Transverse colon (tissue), 4 donors: ENCODE measurements at regions of chr3 and their contacts with region 1.

Region 1: GRCh38 chr3:47009225-47010110 is 30.0 kb downstream of the NBEAL2 start:
- DNase-seq: peak; percentile 85
- H3K4me3 ChIP-seq: peak overlapping the region; percentile 5 to 52 (median 44)
- H3K27ac ChIP-seq: peak overlapping the region; percentile 80 to 86 (median 83)
- H3K4me1 ChIP-seq: peaks cover 0 to 10% (median 3%) of the 10 kb centered on the region in 4 donors
- H3K27me3 ChIP-seq: no peaks in the 10 kb centered on the region
- CTCF ChIP-seq: no peak
- EP300 ChIP-seq: no peak
- POLR2A ChIP-seq: peak; percentile 59

Region 2: GRCh38 chr3:46976326-46977190 is 32.9 kb before region 1 on chr3 and contains the start of gene CCDC12:
- in situ Hi-C with region 1: no loop called
- intact Hi-C with region 1: loop called (anchors 1 kb)
- DNase-seq: peak; percentile 96
- H3K4me3 ChIP-seq: peak within 1 kb of the TSS; percentile 60 to 76 (median 74)
- H3K27ac ChIP-seq: peak within 1 kb of the TSS; percentile 91 to 95 (median 94)
- H3K4me1 ChIP-seq: peaks cover 16 to 74% (median 54%) of the 10 kb centered on the region in 4 donors
- H3K27me3 ChIP-seq: no peaks in the 10 kb centered on the region
- CTCF ChIP-seq: no peak
- EP300 ChIP-seq: no peak
- POLR2A ChIP-seq: peak; percentile 89
- total RNA-seq, gene CCDC12: 50.1 to 72.9 (median 53.0) TPM

Region 3: GRCh38 chr3:47164007-47164881 is 154.8 kb after region 1 on chr3 and contains the start of gene SETD2:
- in situ Hi-C with region 1: loop called in 1 of 4 experiments (anchors 25 kb)
- intact Hi-C with region 1: loop called (anchors 10 kb)
- DNase-seq: peak; percentile 94
- H3K4me3 ChIP-seq: peak within 1 kb of the TSS; percentile 84 to 97 (median 92)
- H3K27ac ChIP-seq: peak within 1 kb of the TSS; percentile 95 to 99 (median 98)
- H3K4me1 ChIP-seq: peaks cover 15 to 44% (median 36%) of the 10 kb centered on the region in 4 donors
- H3K27me3 ChIP-seq: no peaks in the 10 kb centered on the region
- CTCF ChIP-seq: peak; percentile 30 to 81 (median 44)
- EP300 ChIP-seq: no peak
- POLR2A ChIP-seq: peak; percentile 63
- total RNA-seq, gene SETD2: 54.3 to 113 (median 67.9) TPM